Upper lobe of right lung (tissue), 1 donor: ENCODE measurements at regions of chr20 and their contacts with region 1.

Region 1: DNA sequence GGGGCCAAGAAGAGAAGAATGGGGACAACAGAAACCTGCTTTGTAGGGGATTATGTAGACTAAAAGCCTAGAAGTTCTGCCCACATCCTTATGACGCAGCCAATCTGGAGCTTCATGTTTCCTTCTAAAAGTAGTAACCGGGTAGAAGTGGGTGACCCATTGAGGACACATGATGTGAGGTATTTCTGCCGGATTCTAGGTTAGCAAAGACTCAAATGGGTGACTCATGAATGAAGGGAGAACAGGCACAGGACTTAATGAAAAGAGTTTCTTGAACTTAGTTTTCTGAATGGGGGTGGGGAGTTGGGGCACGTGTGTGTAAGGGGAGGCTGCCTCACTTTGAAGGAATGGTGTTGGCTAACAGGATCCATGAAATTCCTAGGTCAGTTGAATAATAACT is 68.8 kb downstream of the CDS2 start:
- DNase-seq: no peak
- ATAC-seq: no peak
- H3K4me3 ChIP-seq: no peak overlapping the region
- H3K27ac ChIP-seq: no peak overlapping the region
- H3K4me1 ChIP-seq: no peaks in the 10 kb centered on the region
- H3K27me3 ChIP-seq: no peaks in the 10 kb centered on the region
- CTCF ChIP-seq: no peak

Region 2: DNA sequence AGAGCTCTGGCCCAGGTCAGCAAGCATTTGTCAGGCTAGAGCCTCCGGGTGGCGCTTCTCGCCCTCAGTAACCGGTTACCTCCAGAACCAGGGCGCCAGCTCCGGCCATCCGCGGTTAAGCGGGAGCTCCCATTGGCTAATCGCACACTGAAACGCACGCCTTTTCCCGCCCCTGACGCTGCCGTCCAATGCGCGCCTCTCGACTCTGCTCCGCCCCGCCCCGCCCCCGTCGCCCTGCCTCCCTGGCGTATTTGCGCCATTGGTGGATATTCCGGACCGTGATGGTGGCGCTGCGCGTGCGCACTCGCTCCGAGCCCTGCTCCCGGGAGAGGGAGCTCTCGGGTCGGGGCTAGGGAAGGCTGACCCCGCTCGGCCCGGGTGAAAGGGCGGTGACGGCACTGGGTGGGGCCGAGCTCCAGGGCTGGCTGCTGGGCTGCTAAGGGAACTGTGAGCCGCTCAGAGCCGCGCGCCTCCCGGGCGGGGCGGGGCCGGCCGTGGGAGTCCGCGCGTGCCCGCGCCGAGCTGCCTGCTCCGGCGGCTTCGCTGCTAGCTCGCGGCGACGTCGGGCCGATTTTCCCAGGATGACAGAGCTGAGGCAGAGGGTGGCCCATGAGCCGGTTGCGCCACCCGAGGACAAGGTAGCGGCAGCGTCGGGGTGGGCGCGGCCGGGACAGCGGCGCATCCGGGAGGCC is 69.0 kb before region 1 on chr20 and contains the start of gene CDS2:
- intact Hi-C with region 1: loop called (anchors 5 kb)
- DNase-seq: peak; percentile 100
- ATAC-seq: peak; percentile 97
- H3K4me3 ChIP-seq: peak within 1 kb of the TSS; percentile 88
- H3K27ac ChIP-seq: peak within 1 kb of the TSS; percentile 97
- H3K4me1 ChIP-seq: peaks cover 25% of the 10 kb centered on the region
- H3K27me3 ChIP-seq: no peaks in the 10 kb centered on the region
- CTCF ChIP-seq: peak; percentile 59
- total RNA-seq, gene CDS2: 65.0 TPM